AG04449 (cell line): ENCODE measurements at regions of chr16 and their contacts with region 1.

Region 1: GRCh38 chr16:714558-715476 is at the start of gene METRN:
- DNase-seq: no peak
- H3K4me3 ChIP-seq: peak within 1 kb of the TSS; percentile 65
- CTCF ChIP-seq: no peak

Region 2: GRCh38 chr16:483341-484075 is 231.3 kb before region 1 on chr16:
- CTCF ChIA-PET with region 1: no interaction called
- POLR2A ChIA-PET with region 1: no interaction called
- DNase-seq: no peak
- H3K4me3 ChIP-seq: no peak overlapping the region
- CTCF ChIP-seq: no peak

Region 3: DNA sequence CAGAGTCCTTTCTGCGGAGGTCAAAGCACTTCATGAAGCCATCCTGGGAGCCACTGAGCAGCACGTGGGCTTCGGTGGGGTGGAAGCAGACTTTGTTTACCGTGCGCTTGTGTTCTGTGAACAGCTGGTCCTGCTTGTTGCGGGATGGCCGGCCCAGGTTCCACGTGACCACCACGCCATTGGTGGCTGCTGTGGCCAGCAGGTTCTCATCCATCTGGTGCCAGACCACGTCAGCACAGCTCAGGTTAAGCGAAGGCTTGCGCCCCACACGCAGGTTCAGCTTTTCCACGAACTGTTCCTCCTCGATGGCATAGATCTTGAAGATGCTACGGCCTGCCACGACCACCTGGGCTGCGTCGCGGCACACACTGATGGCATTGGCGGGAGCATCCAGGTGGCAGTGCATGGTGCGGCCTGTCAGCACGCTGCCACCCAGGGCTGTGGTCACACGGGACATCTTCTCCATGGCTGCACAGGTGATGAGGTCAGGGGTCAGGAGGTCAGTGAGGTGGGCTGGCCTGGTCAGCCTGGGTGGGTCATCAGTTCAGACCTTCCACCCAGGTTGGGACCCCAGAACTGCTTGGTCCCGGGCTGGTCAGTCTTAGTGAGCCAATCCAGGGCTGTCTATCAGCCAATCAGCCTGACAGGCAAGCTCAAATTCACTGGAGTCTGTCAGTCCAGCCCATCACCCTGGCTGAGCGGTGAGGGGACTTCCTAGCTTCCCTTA is 25.5 kb before region 1 on chr16:
- CTCF ChIA-PET with region 1: interaction called, 18 read pairs
- POLR2A ChIA-PET with region 1: interaction called, 5 read pairs
- DNase-seq: no peak
- H3K4me3 ChIP-seq: peak overlapping the region; percentile 82
- CTCF ChIP-seq: no peak

Region 4: DNA sequence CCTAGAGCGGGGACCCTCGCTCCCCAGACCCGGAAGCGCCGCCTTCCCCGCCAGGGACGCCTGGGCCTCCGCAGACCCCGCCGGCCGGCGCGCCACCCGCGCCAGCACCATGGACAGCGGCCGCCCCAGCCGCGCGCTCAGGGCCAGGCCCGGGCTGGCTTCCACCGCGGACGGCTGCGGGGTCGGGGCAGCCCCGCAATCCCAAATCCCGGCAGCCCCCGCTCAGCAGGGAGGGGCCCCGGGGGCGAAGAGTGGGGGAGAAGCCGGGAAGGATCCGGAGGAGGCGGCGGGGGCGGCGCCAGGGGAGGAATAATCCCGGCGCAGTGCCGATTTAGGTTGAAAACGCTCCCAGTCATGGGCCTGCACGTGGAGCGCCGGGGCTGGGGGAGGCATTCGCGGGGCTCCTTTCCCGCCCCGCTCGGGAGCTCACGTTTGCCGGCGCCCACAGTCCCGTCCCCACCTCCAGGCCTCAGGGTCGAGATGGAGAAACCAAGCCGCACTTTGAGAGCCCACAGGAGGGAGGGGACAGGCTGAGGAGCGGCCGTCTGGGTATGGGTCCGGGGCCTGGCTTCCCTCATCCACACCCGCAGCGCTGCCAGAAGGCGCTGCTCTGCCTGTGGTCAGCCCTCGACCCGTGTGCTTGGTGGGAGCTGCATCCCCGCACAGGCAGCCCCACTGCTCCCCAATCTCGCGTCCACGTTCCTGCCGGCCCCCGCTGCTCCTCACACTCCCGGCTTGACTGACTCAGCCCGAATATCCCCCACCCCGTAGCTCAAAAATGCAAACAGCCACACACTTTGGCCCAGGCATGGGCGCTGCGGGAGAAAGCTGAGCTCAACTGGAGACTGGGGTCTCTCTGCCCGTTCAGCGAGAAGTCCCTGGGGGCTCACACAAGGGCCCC is 13.9 kb before region 1 on chr16:
- CTCF ChIA-PET with region 1: interaction called, 53 read pairs
- POLR2A ChIA-PET with region 1: no interaction called
- DNase-seq: no peak
- H3K4me3 ChIP-seq: no peak overlapping the region
- CTCF ChIP-seq: no peak

Region 5: GRCh38 chr16:728131-728889 is 13.5 kb after region 1 on chr16:
- CTCF ChIA-PET with region 1: interaction called, 75 read pairs
- POLR2A ChIA-PET with region 1: interaction called, 6 read pairs
- DNase-seq: no peak
- H3K4me3 ChIP-seq: peak overlapping the region; percentile 71
- CTCF ChIP-seq: no peak

Region 6: GRCh38 chr16:740764-741505 is 26.1 kb after region 1 on chr16 and contains the start of gene CIAO3:
- CTCF ChIA-PET with region 1: interaction called, 29 read pairs
- POLR2A ChIA-PET with region 1: no interaction called
- DNase-seq: peak; percentile 26
- H3K4me3 ChIP-seq: peak within 1 kb of the TSS; percentile 73
- CTCF ChIP-seq: peak; percentile 91

Region 7: GRCh38 chr16:788394-789126 is 73.7 kb after region 1 on chr16 and contains the start of gene CHTF18:
- CTCF ChIA-PET with region 1: interaction called, 210 read pairs
- POLR2A ChIA-PET with region 1: interaction called, 3 read pairs
- DNase-seq: peak; percentile 4
- H3K4me3 ChIP-seq: peak within 1 kb of the TSS; percentile 88
- CTCF ChIP-seq: no peak

Region 8: DNA sequence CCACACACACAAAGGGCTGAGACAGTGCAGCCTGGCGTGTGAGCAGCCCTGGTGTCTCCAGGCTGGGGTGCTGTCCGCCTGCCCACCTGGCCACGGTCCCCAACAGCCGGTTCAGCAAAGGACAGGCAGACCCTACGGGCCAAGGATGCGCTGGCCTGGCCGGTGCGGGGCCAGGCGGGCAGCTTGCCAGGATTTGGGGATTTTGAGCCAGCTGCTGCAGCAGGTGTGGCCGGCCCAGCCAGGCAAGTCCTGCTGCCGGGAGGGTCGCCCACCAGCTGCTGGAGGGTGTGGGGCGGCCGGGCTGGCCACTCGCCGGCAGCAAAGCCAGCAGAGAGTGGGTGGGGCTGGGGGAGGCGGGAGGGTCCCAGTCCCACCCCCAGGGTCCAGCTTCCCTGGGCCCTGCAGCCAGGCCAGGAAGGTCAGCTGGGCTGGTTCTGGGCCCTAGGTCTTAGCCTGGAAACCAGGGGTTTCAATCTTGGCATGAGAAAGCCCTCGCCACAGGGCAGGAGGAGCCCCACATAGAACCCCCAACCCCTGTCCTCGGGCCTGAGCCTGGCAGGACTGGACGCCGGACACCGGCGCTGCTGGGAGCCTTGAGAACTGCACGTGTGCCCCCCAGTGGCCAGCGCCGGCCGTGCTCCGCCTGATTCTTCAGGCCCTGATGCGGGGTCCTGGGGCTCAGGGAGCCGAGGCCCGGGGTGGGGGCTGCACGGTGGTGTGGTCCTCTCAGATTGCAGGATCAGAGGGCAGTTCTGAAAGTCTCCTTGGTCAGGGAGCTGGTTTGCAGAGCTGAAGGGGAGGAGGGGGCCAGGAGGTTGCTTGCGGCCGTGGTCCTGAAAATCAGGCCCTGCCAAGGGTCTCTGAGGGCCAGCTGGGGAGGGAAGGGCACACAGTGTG is 340.1 kb after region 1 on chr16:
- CTCF ChIA-PET with region 1: interaction called, 79 read pairs
- POLR2A ChIA-PET with region 1: no interaction called
- DNase-seq: no peak
- H3K4me3 ChIP-seq: no peak overlapping the region
- CTCF ChIP-seq: peak; percentile 89